HepG2 (cell line): ENCODE measurements at regions of chr5 and their contacts with region 1.

Region 1: DNA sequence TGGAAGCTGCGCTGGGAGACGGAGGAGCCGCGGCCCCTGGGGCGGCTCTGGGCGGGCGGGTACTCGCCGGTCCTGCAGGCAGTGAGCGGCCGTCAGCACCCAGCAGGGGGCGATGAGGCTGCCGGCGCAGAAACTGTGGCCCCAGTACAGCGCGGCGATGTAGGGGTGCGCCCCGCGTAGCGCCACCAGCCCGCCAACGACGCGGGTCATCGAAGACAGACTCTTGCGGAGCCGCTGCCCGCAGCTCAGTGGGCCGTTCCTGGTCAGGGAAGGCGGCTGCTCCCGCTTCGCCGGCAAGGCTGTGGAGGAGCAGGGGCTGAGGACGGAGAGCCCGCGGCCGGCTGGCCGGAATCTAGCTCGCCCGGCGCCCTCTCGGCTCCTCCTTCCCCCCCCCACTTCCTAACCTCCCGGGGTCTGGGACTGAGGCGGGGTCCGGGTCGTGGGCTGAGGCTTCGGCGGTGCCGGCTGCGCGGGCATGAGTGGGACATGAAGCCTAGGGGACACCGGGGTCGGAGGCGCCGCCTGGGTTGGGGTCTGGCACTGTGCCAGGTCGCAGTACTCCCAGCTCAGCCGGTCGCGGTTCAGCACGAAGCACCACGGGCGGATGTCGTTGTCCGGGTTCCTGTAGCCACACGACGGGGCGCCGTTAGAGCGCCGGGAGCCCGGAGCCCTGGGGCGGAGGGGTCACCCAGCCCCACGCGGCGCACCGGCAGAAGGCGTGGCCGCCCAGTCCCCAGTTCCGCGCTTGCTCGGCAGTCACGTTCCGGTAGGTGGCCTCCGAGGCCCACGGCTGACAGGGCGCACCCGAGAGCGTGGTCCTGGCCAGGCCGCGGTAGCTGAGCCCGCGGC is 3.6 kb upstream of the PFN3 start:
- DNase-seq: no peak
- ATAC-seq: peak; percentile 91
- H3K4me3 ChIP-seq: peak overlapping the region; percentile 30 to 70 (median 59); a peak in 5 of 6 replicates
- H3K27ac ChIP-seq: no peak overlapping the region
- H3K4me1 ChIP-seq: peaks cover 20% of the 10 kb centered on the region
- H3K27me3 ChIP-seq: no peaks in the 10 kb centered on the region
- CTCF ChIP-seq: peak; percentile 86
- EP300 ChIP-seq: no peak
- POLR2A ChIP-seq: no peak
- RAD21 ChIP-seq: peak; percentile 80

Region 2: DNA sequence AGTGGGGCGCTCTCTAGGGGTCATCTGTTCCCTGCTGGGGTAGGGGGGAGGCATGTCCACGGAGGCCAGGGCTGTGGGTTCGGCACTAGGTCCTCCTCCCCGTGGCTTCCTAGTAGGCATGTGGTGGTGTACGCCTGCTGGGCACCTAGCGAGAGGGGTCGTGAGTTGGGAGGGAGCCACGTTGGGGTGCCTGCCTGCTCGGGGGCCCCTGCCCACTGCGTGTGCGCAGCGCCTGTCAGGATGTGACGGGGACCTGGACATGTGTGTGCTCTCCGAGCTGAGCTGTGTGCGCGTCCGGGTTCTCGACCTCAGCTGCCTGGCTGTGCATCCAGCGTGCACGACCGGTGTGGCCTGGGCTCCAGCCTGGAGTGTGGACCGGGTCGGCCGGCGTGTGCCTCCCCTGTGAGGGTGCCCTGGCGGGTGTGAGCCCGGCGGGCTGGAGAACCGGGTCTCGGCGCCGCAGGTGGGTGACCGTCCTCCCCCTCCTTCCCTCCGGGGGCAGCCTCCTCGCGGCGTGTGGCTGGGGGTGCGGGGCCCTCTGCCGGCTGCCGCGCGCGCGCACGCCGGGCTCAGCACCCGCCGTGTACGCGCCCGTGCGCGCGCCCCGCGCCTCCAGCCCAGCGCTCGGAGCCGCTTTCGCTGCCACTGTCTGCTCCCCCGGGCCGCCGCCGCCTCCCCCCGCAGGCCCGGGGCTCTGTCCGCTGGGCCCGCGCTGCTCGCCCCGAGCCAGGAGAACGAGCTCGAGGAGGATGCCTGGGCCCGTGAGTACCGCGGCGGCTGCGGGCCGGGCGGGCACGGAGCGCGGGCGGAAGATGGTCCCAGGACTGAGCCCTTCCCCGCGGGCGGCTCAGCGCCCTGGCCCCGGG is 42.4 kb after region 1 on chr5 and contains the start of gene PRR7:
- CTCF ChIA-PET with region 1: no interaction called
- POLR2A ChIA-PET with region 1: interaction called, 19 read pairs
- in situ Hi-C with region 1: no loop called
- intact Hi-C with region 1: no loop called
- DNase-seq: no peak
- ATAC-seq: peak; percentile 27
- H3K4me3 ChIP-seq: peak within 1 kb of the TSS; percentile 55 to 80 (median 61)
- H3K27ac ChIP-seq: peak within 1 kb of the TSS; percentile 74
- H3K4me1 ChIP-seq: peaks cover 49% of the 10 kb centered on the region
- H3K27me3 ChIP-seq: no peaks in the 10 kb centered on the region
- CTCF ChIP-seq: peak; percentile 18
- EP300 ChIP-seq: no peak
- POLR2A ChIP-seq: peak in 1 of 2 experiments; percentile 41; a peak in 1 of 4 replicates
- RAD21 ChIP-seq: peak; percentile 65
- total RNA-seq, gene PRR7: 3.9 and 5.0 TPM in 2 replicates

Region 3: DNA sequence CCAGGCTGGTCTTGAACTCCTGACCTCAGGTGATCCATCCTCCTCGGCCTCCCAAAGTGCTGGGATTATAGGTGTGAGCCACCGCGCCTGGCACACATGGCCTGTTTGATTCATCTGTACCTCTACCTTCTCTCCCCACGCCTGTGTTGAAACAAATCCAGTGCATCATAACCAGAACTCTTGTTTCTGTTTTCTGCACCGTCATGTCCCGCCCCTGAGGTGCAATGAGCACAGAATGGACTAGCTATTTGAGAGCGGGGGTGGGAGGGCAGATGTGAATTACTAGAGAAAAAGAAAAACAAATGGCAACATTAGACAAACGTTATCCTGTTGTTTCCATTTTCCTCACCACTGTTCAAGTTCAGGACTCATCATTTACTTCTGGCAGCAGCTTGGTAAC is 161.0 kb after region 1 on chr5:
- CTCF ChIA-PET with region 1: no interaction called
- POLR2A ChIA-PET with region 1: no interaction called
- in situ Hi-C with region 1: no loop called
- intact Hi-C with region 1: no loop called
- DNase-seq: no peak
- ATAC-seq: no peak
- H3K4me3 ChIP-seq: no peak overlapping the region
- H3K27ac ChIP-seq: no peak overlapping the region
- H3K4me1 ChIP-seq: peaks cover 12% of the 10 kb centered on the region; the same call in 1 of the 2 replicates
- H3K27me3 ChIP-seq: peaks cover 0 to 12% of the 10 kb centered on the region in 2 experiments; a peak in 2 of 5 replicates
- CTCF ChIP-seq: no peak
- EP300 ChIP-seq: no peak
- POLR2A ChIP-seq: no peak
- RAD21 ChIP-seq: no peak